Activated B cell treated with CpG ODN at 0.5 μM for 24 hours (primary cell): ENCODE measurements at regions of chr10 and their contacts with region 1.

Region 1: DNA sequence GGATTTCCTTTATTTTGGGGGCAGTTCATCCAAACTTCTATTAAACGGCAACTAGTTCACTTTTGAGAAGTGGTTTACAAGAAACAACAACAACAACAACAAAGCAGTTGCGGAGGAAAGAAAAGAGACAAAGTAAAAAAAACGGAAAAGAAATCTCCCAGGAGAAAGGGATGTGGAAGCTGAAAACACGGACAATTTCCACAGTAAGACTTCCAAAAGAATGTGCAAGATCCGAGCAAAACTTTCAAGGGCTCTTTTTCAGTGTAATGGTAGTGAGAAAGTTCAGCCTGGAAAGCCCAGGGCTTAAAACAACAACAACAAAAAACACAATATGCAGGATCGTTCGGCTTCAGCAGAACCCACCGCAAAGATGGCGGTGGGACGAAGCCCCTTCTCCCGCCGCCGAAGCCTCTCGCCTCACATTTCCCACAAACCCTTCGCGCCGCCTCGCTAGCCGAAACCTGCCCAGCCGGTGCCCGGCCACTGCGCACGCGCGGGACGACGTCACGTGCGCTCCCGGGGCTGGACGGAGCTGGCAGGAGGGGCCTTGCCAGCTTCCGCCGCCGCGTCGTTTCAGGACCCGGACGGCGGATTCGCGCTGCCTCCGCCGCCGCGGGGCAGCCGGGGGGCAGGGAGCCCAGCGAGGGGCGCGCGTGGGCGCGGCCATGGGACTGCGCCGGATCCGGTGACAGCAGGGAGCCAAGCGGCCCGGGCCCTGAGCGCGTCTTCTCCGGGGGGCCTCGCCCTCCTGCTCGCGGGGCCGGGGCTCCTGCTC is at the start of gene TNKS2:
- DNase-seq: peak; percentile 96
- ATAC-seq: peak; percentile 70
- H3K4me3 Mint-ChIP-seq: peak within 1 kb of the TSS; percentile 93
- H3K27ac Mint-ChIP-seq: peak within 1 kb of the TSS; percentile 97
- H3K4me1 Mint-ChIP-seq: peaks cover 66% of the 10 kb centered on the region
- H3K27me3 Mint-ChIP-seq: no peaks in the 10 kb centered on the region
- CTCF ChIP-seq: no peak
- total RNA-seq, gene TNKS2: 29.5 and 33.1 TPM in 2 replicates

Region 2: DNA sequence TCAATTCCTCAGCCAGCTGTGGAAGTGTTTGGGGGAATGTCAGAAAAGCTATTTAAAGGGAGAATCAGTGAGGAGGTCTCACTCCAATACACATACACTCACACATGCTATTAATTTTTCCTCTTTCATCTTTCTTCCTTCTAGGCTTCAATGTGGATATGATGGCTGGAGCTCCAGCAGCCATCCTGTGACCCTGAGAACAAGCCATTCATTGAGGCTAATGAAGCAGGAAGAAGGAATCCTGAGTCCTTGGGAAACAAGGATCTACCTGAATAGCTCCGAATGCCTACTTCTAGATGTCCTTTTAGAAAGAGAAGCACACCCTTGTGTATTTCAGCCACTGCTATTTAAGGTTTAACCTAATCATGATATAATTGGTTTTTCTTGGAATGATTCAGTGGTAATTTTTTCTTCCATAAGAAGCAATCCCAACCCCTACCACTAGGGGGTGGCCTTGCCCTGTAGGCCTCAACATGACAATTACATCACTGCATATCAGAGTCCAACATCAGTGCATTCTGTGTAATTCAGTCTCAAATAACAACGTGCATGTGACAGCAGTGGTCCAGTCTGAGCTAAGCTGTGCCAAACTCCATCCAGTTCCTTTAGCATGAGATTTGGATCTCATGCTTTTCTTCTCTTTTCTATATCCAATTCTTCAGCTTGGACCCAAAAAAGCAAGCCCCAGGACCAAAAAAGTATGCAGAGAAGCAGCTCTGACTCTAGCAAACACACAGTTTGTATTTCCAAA is 791.9 kb before region 1 on chr10:
- CTCF ChIA-PET with region 1: no interaction called
- POLR2A ChIA-PET with region 1: no interaction called
- intact Hi-C with region 1: loop called (anchors 5 kb)
- DNase-seq: no peak
- ATAC-seq: peak; percentile 73
- H3K4me3 Mint-ChIP-seq: peak overlapping the region; percentile 74
- H3K27ac Mint-ChIP-seq: peak overlapping the region; percentile 91
- H3K4me1 Mint-ChIP-seq: peaks cover 75% of the 10 kb centered on the region
- H3K27me3 Mint-ChIP-seq: no peaks in the 10 kb centered on the region
- CTCF ChIP-seq: peak; percentile 80

Region 3: GRCh38 chr10:91409869-91410637 is 388.0 kb before region 1 on chr10 and contains the start of gene HECTD2:
- CTCF ChIA-PET with region 1: no interaction called
- POLR2A ChIA-PET with region 1: interaction called, 4 read pairs
- intact Hi-C with region 1: loop called (anchors 1 kb)
- DNase-seq: peak; percentile 84
- ATAC-seq: peak; percentile 82
- H3K4me3 Mint-ChIP-seq: peak within 1 kb of the TSS; percentile 89
- H3K27ac Mint-ChIP-seq: peak within 1 kb of the TSS; percentile 90
- H3K4me1 Mint-ChIP-seq: peaks cover 13% of the 10 kb centered on the region
- H3K27me3 Mint-ChIP-seq: no peaks in the 10 kb centered on the region
- CTCF ChIP-seq: no peak
- total RNA-seq, gene HECTD2: 8.1 and 8.6 TPM in 2 replicates

Region 4: GRCh38 chr10:91493313-91493712 is 304.7 kb before region 1 on chr10:
- CTCF ChIA-PET with region 1: no interaction called
- POLR2A ChIA-PET with region 1: no interaction called
- intact Hi-C with region 1: no loop called
- DNase-seq: no peak
- ATAC-seq: no peak
- H3K4me3 Mint-ChIP-seq: no peak overlapping the region
- H3K27ac Mint-ChIP-seq: no peak overlapping the region
- H3K4me1 Mint-ChIP-seq: no peaks in the 10 kb centered on the region
- H3K27me3 Mint-ChIP-seq: no peaks in the 10 kb centered on the region
- CTCF ChIP-seq: no peak

Region 5: DNA sequence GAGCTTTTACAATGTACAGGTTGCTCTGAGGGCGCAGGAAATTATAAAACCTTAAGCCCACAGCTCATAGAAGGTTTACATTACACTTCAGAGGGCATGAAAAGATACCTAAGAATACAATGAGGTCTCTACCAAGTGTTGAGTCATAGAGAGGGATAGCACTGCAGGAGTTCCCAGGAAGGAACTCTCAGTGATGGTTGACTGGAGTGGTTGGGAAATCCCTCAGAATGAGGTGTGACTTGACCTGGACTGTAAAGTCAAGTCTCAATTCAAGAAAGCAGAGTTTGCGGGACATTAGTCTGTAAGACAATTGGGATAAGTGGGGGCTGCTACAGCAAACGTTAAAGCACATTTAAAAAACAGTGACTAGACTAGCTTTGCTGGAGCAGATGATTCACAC is 22.1 kb after region 1 on chr10:
- CTCF ChIA-PET with region 1: interaction called, 3 read pairs
- POLR2A ChIA-PET with region 1: no interaction called
- intact Hi-C with region 1: loop called (anchors 2 kb)
- DNase-seq: no peak
- ATAC-seq: no peak
- H3K4me3 Mint-ChIP-seq: no peak overlapping the region
- H3K27ac Mint-ChIP-seq: no peak overlapping the region
- H3K4me1 Mint-ChIP-seq: no peaks in the 10 kb centered on the region
- H3K27me3 Mint-ChIP-seq: no peaks in the 10 kb centered on the region
- CTCF ChIP-seq: no peak

Region 6: DNA sequence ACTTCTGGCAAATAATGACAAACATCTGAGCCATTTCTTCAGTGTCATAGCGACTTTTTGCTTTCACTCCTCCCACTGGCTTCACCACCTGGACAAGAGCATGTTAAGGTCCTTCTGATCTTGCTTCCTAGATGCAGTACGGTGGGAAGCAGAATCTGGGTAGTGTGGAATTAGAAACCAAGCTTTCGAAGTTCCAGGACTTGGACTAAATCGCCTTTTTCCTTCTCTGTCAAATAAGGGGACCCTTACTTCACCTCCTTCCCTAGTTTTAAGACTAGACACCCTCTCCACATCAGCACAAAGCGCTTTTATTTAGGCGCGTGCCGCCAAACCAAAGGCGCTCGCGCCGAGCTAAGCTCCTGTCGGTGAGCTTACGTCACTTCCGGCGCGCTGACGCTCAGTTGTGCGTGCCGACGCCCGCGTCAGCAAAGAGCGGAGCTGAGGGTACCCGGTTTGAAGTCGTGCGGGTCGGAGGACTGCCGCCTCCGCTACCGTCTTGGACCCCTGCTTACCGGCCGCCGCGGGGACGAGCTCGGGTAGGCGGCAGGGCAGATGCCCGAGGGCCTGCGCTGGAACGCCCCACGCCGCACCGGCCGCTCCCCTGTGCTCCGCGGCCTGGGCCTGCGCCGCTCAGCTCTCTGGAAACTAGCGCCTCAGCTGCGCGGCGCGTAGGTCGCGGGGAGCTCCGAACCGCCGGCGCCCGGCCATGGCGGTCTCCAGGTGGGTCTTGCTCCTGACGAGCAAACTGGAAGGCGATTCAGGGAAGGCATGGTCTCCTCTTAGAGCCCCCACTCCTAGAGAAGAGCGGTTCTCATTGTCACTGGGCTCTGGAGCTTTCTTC is 125.5 kb after region 1 on chr10 and contains the start of gene BTAF1:
- CTCF ChIA-PET with region 1: no interaction called
- POLR2A ChIA-PET with region 1: interaction called, 28 read pairs
- intact Hi-C with region 1: loop called (anchors 1 kb)
- DNase-seq: peak; percentile 91
- ATAC-seq: peak; percentile 94
- H3K4me3 Mint-ChIP-seq: peak within 1 kb of the TSS; percentile 92
- H3K27ac Mint-ChIP-seq: peak within 1 kb of the TSS; percentile 96
- H3K4me1 Mint-ChIP-seq: peaks cover 42% of the 10 kb centered on the region
- H3K27me3 Mint-ChIP-seq: no peaks in the 10 kb centered on the region
- CTCF ChIP-seq: no peak
- total RNA-seq, gene BTAF1: 63.4 and 74.7 TPM in 2 replicates

Region 7: DNA sequence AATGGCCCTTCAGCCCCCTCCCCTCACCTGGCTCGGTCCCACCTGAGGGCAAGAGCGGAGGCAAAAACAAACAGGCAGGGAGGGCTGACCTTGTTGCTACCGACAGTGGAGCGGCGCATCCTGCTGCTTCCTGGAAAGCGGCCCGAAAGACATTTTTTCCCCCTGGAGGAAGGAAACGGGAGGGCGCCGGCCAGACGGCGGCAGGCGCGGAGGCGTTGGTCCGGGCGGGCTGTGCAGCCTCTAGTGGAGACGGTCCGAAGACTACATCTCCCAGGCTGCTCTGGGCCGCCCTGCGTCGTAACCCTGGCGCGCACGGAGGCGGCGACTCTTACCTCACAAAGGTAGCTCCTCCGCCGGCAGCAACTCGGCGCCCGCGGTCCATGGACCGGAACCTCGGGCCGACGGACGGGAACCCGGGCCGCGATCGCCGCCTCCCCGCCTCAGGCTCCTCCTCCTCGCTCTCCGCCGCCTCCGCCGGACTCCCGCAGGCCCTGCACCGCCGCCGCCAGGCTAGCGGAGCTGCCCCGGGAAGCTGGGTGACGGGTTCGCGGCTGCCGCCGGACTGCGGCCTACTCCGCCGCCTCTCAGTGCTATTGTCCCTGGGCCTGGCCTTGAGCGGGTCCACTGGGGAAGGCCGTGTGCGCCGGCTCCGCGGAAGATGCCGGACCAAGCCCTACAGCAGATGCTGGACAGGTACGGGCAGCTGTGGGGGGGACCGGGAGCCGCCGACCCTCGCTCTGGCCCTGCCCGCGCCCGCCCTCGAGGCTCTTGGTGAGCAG is 493.0 kb after region 1 on chr10 and contains the starts of genes CPEB3 and MARCHF5:
- CTCF ChIA-PET with region 1: no interaction called
- POLR2A ChIA-PET with region 1: no interaction called
- intact Hi-C with region 1: loop called (anchors 1 kb)
- DNase-seq: peak; percentile 87
- ATAC-seq: peak; percentile 97
- H3K4me3 Mint-ChIP-seq: peak within 1 kb of the TSS; percentile 96
- H3K27ac Mint-ChIP-seq: peak within 1 kb of the TSS; percentile 84
- H3K4me1 Mint-ChIP-seq: peaks cover 28% of the 10 kb centered on the region
- H3K27me3 Mint-ChIP-seq: no peaks in the 10 kb centered on the region
- CTCF ChIP-seq: no peak
- total RNA-seq, gene CPEB3: 2.2 and 2.5 TPM in 2 replicates
- total RNA-seq, gene MARCHF5: 21.6 and 26.5 TPM in 2 replicates

Region 8: GRCh38 chr10:92848441-92849233 is 1050.6 kb after region 1 on chr10 and contains the start of gene EXOC6:
- CTCF ChIA-PET with region 1: no interaction called
- POLR2A ChIA-PET with region 1: no interaction called
- intact Hi-C with region 1: loop called (anchors 5 kb)
- DNase-seq: peak; percentile 89
- ATAC-seq: peak; percentile 84
- H3K4me3 Mint-ChIP-seq: peak within 1 kb of the TSS; percentile 87
- H3K27ac Mint-ChIP-seq: peak within 1 kb of the TSS; percentile 87
- H3K4me1 Mint-ChIP-seq: peaks cover 34% of the 10 kb centered on the region
- H3K27me3 Mint-ChIP-seq: no peaks in the 10 kb centered on the region
- CTCF ChIP-seq: no peak
- total RNA-seq, gene EXOC6: 15.3 and 17.3 TPM in 2 replicates